Activated CD4-positive, alpha-beta T cell treated with anti-CD3 and anti-CD28 coated beads, Interleukin-2, amount 10 ng/mL, durations not matched to agents 7 days and 5 days (primary cell): ENCODE measurements at regions of chr13 and their contacts with region 1.

Region 1: GRCh38 chr13:105709181-105709580 is 826.3 kb downstream of the EFNB2 start:
- DNase-seq: no peak
- H3K4me3 Mint-ChIP-seq: no peak overlapping the region
- H3K27ac Mint-ChIP-seq: no peak overlapping the region
- H3K4me1 Mint-ChIP-seq: no peaks in the 10 kb centered on the region
- H3K27me3 Mint-ChIP-seq: no peaks in the 10 kb centered on the region

Region 2: DNA sequence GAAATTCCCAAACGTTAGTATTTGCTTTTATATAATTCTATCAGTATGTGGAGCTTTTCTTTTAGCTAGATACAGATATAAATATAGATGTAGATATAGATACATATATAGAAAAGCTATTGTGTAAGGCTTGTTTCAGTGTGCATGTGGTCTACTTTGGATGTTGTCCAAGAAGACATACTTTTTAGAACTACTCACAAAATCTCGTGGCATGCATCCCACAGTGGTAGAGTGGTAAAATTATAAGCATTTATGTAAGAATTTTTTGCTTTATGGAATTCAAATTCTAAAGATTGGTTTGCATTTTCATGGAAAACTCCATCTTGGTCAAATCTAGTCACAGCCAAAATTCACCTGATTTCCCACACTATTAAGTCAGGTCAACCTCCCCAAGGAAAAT is 54.1 kb before region 1 on chr13:
- CTCF ChIA-PET with region 1: no interaction called
- POLR2A ChIA-PET with region 1: no interaction called
- DNase-seq: no peak
- H3K4me3 Mint-ChIP-seq: no peak overlapping the region
- H3K27ac Mint-ChIP-seq: no peak overlapping the region
- H3K4me1 Mint-ChIP-seq: no peaks in the 10 kb centered on the region
- H3K27me3 Mint-ChIP-seq: no peaks in the 10 kb centered on the region

Region 3: DNA sequence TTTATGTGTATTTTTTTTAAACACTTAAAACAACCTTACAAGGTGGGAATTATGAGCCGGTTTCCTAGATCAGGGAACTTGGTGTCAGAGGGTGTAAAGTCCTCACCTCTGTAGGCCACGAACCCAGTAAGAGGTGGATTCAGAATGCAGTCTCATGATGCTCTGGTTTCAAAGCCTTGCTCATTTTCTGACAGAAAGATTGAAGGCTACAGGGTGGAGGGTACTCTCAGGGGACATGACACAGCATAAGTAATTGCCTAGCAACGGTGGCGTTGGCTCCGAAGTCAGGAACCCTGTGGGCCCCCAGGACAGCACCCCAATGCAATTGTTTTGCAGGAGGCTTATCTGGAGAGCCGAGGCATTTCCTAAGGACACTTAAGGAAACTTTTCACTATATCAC is 31.6 kb after region 1 on chr13:
- CTCF ChIA-PET with region 1: interaction called, 10 read pairs
- POLR2A ChIA-PET with region 1: no interaction called
- DNase-seq: no peak
- H3K4me3 Mint-ChIP-seq: no peak overlapping the region
- H3K27ac Mint-ChIP-seq: no peak overlapping the region
- H3K4me1 Mint-ChIP-seq: no peaks in the 10 kb centered on the region
- H3K27me3 Mint-ChIP-seq: no peaks in the 10 kb centered on the region